Aorta (tissue), 5 donors: ENCODE measurements at regions of chr10 and their contacts with region 1.

Region 1: DNA sequence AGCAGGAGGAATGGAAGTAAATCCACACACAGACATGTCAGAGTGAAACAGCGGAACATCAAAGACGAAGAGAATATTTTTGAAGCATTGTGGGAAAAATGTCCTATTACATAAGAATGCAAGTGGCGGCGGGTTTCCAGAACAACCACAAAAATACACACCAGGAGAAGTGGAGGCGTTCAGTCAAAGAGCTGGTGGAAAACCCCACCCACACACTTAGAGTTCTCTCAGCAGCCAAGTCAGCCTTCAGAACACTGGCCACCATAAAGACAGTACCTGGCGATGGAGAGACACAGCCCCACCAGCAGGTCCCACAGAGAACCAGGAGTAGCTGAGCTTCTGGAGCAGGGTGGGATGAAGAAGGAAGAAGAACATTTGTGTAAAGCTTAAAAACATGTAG is 23.7 kb downstream of the NKX6-2 start:
- DNase-seq: no peak
- ATAC-seq: no peak
- H3K4me3 ChIP-seq: no peak overlapping the region
- H3K27ac ChIP-seq: no peak overlapping the region
- H3K4me1 ChIP-seq: no peaks in the 10 kb centered on the region
- H3K27me3 ChIP-seq: no peaks in the 10 kb centered on the region

Region 2: DNA sequence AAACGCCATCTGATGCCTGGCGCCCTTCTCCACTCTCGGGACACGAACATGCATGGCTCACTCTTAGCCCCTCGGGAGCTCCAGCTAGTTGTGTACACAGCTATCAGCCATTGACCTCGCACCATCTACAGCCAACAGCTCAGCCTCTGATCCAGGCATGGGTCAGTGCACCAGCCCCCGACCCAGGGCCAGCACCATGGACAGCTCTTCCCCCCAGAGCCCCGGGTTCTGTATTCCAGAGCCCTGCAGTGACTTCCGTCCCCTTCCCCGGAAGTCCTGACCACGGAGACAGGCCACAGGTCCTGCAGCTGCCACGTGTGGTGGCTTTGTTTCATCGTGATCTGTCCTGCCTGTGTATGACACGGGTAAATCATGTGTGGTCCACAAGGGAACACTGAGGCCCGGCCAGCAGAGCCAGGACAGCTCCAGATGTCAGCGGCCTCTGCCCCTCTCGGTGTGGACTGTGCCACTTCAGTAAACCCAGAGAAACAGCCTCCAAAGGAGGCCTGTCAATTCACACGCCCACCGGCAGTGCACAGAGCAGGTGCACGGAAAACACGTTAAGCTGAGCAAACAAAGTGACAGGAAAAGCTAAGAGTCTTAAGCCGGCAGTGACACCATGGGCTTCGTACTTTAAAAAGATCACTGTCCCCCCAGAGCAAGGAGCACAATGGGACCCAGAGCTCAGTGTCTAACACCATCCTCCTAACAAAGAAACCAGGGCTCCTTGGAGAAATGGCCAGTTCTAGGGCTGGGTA is 467.5 kb before region 1 on chr10:
- intact Hi-C with region 1: loop called in 1 of 2 experiments (anchors 5 kb)
- DNase-seq: peak; percentile 16 to 66
- ATAC-seq: peak; percentile 9
- H3K4me3 ChIP-seq: no peak overlapping the region
- H3K27ac ChIP-seq: no peak overlapping the region
- H3K4me1 ChIP-seq: no peaks in the 10 kb centered on the region
- H3K27me3 ChIP-seq: no peaks in the 10 kb centered on the region

Region 3: GRCh38 chr10:132536971-132537712 is 225.1 kb before region 1 on chr10:
- intact Hi-C with region 1: no loop called
- DNase-seq: peak; percentile 100
- ATAC-seq: peak; percentile 98
- H3K4me3 ChIP-seq: peak overlapping the region; percentile 20 to 53
- H3K27ac ChIP-seq: peak overlapping the region in 1 of 2 donors; percentile 37
- H3K4me1 ChIP-seq: no peaks in the 10 kb centered on the region
- H3K27me3 ChIP-seq: no peaks in the 10 kb centered on the region